PC-9 (cell line): ENCODE measurements at regions of chr10 and their contacts with region 1.

Region 1: GRCh38 chr10:13099666-13100348 is at the start of gene OPTN:
- DNase-seq: peak; percentile 61 to 77
- H3K4me3 ChIP-seq: peak within 1 kb of the TSS; percentile 70
- H3K27ac ChIP-seq: peak within 1 kb of the TSS; percentile 38; the same call in 1 of the 2 replicates
- H3K4me1 ChIP-seq: 0 out of 2 replicates have a peak, but pooled peaks cover 3% of the 10 kb centered on the region
- H3K27me3 ChIP-seq: no peaks in the 10 kb centered on the region
- CTCF ChIP-seq: peak; percentile 71
- total RNA-seq, gene OPTN: 26.6 and 26.8 TPM in 2 replicates

Region 2: DNA sequence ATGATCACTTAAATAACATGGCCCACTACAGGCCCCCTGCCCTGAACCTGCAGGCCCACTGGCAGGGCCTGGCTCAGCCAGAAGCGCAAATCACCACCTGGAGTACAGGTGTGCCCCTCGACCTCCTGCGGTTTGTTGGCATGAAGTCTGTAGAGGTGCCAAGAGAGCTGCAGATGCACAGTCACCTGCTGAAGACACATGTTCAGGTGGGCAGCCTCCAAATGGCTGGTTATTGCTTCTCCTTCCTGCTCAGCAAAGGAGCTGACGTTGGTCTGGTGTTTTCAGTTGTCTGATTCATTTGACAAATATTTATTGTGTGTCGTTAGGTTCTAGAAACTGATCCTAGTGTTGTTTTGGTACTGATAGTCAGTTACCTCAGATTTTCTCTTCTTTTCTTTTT is 1002.0 kb before region 1 on chr10:
- CTCF ChIA-PET with region 1: no interaction called
- POLR2A ChIA-PET with region 1: no interaction called
- intact Hi-C with region 1: no loop called
- DNase-seq: peak in 1 of 2 experiments; percentile 75
- H3K4me3 ChIP-seq: no peak overlapping the region
- H3K27ac ChIP-seq: no peak overlapping the region
- H3K4me1 ChIP-seq: no peaks in the 10 kb centered on the region
- H3K27me3 ChIP-seq: no peaks in the 10 kb centered on the region
- CTCF ChIP-seq: no peak

Region 3: DNA sequence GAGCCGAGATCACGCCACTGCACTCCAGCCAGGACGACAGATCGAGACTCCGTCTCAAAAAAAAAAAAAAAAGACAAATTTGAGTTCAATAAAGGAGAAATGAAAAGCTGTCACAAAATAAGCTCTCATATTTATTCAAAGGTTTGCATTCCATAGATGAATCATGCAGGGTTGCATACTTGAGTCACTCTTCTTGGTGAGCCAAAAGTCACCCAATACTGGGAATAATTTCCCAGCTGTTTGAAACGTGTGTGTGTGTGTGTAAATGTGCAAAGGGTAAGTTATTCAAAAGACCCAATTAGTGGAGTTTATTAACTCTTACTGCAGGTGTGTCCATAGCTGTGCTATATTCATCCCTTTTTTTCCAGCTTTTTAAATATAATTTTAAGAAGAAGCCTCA is 396.0 kb before region 1 on chr10:
- CTCF ChIA-PET with region 1: interaction called, 26 read pairs
- POLR2A ChIA-PET with region 1: no interaction called
- intact Hi-C with region 1: no loop called
- DNase-seq: peak in 1 of 2 experiments; percentile 86
- H3K4me3 ChIP-seq: peak overlapping the region; percentile 34; the same call in 1 of the 2 replicates
- H3K27ac ChIP-seq: peak overlapping the region; percentile 98
- H3K4me1 ChIP-seq: peaks cover 69% of the 10 kb centered on the region
- H3K27me3 ChIP-seq: no peaks in the 10 kb centered on the region
- CTCF ChIP-seq: no peak

Region 4: DNA sequence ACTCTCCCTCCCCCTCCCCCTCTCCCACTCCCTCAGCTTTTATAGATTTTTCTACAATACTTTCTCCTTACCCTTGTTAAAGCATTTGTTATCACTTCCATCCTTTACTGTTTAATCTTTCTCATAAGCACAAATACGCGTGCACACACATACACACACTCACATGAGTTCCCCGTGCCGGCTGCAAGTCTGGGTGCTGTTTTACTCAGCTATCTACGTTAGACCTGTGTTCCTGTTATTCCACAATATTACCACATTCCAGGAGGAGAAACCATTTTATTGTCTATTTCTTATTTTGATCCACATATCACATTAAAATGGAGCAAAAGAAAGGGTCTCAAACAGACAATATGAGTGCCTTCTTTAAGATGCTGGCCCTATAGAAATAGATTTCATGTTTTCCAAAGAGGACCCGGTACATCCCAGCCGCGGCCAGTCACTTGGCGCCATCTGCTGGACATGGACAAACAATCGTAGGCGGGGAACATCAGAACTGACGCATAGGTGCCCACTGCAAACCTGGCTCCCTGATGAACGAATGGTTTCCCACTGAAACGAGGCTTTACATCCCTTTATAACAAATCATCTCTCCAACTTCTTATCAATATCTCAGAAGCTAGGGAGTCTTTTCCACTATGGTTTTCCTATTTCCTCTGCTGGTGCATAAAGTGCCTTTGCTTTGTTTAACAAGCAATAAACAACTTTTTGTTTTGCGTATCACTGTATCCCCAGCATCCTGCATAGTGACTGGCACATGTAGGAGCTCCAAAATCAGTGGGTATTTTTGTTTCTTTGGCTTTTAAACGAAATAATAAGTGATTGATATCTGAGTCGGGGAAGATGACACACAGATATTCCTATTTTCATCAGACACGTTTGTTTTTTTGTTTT is 25.0 kb before region 1 on chr10:
- CTCF ChIA-PET with region 1: no interaction called
- POLR2A ChIA-PET with region 1: no interaction called
- intact Hi-C with region 1: no loop called
- DNase-seq: peak; percentile 37 to 64
- H3K4me3 ChIP-seq: no peak overlapping the region
- H3K27ac ChIP-seq: no peak overlapping the region
- H3K4me1 ChIP-seq: no peaks in the 10 kb centered on the region
- H3K27me3 ChIP-seq: no peaks in the 10 kb centered on the region
- CTCF ChIP-seq: peak; percentile 81

Region 5: DNA sequence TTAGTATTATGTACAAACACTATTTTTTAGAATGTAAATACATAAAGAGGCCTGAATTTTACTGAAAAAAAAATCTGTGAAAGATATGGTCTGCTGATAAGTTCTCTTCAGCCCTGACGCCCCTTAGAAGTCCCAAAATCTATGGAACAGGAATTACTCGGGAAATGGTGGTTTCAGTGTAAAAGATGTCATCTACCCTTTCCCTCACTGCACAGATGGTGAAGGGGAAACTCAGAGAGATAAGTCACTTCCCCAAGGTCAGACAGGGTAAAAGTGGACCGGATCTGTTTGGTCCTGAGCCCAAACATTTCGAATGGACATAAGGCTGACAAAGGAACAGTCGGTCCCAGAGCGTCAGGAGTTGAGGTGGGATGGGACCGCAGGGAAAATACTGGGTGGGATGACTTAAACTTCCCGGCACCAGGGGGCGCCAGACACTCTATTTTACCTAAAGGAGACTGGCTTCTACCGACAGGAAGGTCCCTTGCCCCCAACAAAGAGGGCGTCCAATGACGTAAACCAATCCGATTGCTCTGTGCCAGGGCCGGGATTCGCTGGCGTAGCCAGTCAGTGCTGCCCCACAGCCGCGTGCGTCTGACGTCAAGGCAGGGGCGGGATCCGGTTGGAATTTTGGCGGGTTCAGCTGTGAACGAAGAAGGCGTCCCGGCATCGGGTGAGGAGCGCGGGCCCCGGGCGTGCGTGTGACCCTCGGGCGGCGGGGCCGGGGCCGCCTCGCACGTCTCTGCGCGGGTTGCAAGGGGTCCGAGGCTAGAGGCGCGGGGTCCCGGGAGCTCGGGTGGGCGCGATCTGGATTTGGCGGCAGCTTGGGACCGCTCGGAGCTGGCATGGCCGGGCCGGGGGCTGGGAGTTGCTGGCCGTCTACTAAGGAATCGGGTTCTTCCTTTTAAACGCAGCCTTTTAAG is 61.4 kb after region 1 on chr10 and contains the start of gene MCM10:
- CTCF ChIA-PET with region 1: no interaction called
- POLR2A ChIA-PET with region 1: no interaction called
- intact Hi-C with region 1: loop called (anchors 1 kb)
- DNase-seq: peak; percentile 95 to 97
- H3K4me3 ChIP-seq: peak within 1 kb of the TSS; percentile 77
- H3K27ac ChIP-seq: no peak within 1 kb of the TSS
- H3K4me1 ChIP-seq: peaks cover 14% of the 10 kb centered on the region; the same call in 1 of the 2 replicates
- H3K27me3 ChIP-seq: no peaks in the 10 kb centered on the region
- CTCF ChIP-seq: peak; percentile 80
- total RNA-seq, gene MCM10: 20.9 and 24.5 TPM in 2 replicates

Region 6: DNA sequence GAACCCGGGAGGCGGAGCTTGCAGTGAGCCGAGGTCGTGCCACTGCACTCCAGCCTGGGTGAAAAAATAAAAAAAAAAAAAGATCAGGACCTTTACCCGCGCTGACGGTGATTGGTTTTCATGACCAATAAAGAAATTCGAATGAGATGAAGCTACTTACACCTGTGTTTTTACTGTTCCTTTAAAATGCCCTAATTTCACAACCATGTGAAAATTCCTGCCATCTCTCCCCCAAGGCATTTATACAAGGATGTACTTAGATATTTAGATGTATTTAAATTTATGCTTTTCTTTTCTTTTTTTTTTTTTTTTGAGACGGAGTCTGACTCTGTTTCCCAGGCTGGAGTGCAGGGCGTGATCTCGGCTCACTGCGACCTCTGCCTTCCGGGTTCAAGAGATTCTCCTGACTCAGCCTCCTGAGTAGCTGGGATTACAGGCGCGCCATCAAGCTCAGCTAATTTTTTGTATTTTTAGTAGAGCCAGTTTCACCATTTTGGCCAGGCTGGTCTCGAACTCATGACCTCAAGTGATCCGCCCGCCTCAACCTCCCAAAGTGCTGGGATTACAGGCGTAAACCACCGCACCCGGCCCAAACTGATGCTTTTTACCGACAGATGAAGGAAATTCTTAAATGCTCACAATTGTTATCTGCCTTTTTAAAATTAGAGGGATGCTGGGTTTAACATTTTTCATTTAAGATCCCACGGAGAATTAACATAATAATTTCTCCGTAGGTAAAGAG is 203.2 kb after region 1 on chr10:
- CTCF ChIA-PET with region 1: no interaction called
- POLR2A ChIA-PET with region 1: no interaction called
- intact Hi-C with region 1: loop called (anchors 1 kb)
- DNase-seq: no peak
- H3K4me3 ChIP-seq: peak overlapping the region; percentile 66; the same call in 1 of the 2 replicates
- H3K27ac ChIP-seq: no peak overlapping the region
- H3K4me1 ChIP-seq: peaks cover 5% of the 10 kb centered on the region; the same call in 1 of the 2 replicates
- H3K27me3 ChIP-seq: no peaks in the 10 kb centered on the region
- CTCF ChIP-seq: no peak

Region 7: DNA sequence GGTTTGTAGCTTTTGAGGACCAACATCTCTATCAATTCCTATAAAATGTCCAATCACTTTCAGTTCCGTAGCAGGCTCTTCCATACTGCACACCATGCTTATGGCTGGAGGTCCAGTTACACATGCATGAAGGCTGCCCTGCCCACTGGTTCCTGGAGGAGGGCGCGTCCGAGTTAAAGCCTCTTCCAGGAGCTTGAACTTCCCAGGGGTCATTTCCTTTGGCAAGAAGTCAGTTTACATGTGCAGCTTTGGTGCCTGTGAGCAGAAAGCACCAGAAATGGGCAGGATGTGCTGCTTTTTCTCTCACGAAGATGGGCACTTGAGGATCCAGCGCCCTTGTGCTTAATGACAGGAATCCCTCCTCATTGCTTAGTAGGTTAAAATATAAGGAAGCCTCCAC is 217.7 kb after region 1 on chr10:
- CTCF ChIA-PET with region 1: no interaction called
- POLR2A ChIA-PET with region 1: no interaction called
- intact Hi-C with region 1: no loop called
- DNase-seq: no peak
- H3K4me3 ChIP-seq: no peak overlapping the region
- H3K27ac ChIP-seq: no peak overlapping the region
- H3K4me1 ChIP-seq: no peaks in the 10 kb centered on the region
- H3K27me3 ChIP-seq: no peaks in the 10 kb centered on the region
- CTCF ChIP-seq: no peak